AG04450 (cell line): ENCODE measurements at regions of chr9 and their contacts with region 1.

Region 1: GRCh38 chr9:16213781-16214515 is 656.5 kb downstream of the BNC2 start:
- DNase-seq: peak; percentile 95
- H3K4me3 ChIP-seq: no peak overlapping the region
- H3K27ac ChIP-seq: peak overlapping the region; percentile 75
- H3K27me3 ChIP-seq: peaks cover 3% of the 10 kb centered on the region
- CTCF ChIP-seq: no peak

Region 2: DNA sequence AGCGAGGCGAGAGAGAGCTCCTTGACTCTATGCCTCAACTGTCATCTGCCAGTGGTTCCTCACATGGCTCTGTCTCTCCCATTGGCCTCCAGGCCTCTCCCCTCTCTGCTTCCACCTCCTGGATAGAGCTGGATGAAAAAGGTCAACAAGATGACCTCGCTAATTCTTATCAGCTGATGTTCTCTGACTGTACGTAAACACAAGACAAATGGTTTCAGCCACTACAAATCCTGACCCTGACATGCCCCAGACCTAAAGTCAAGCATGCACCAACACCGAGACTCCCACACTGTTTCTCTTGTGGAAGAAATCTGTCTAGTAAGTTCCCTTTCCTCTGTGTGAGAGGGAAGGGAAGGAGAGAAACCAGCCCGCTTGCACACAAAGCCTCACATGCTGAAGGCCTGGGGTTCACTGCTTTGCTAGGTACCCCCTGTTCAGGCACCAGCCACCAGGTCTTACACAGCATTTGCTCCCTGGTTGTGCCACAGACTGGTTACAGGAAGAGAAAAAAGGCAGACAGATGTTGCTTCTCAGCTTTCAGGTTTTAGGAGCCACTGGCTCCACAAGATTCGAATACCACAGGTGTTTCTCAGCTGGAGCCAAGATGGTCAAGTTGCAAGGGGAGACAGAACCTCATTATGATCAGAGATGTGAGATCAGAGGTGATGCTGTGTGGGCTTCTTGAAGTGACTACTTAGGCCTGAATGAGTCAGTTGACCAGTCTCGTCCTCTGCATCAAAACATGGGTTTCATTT is 68.6 kb before region 1 on chr9:
- CTCF ChIA-PET with region 1: no interaction called
- POLR2A ChIA-PET with region 1: no interaction called
- DNase-seq: no peak
- H3K4me3 ChIP-seq: no peak overlapping the region
- H3K27ac ChIP-seq: no peak overlapping the region
- H3K27me3 ChIP-seq: no peaks in the 10 kb centered on the region
- CTCF ChIP-seq: no peak

Region 3: GRCh38 chr9:16202914-16203728 is 10.8 kb before region 1 on chr9:
- CTCF ChIA-PET with region 1: interaction called, 3 read pairs
- POLR2A ChIA-PET with region 1: interaction called, 23 read pairs
- DNase-seq: peak; percentile 70
- H3K4me3 ChIP-seq: no peak overlapping the region
- H3K27ac ChIP-seq: peak overlapping the region; percentile 48
- H3K27me3 ChIP-seq: no peaks in the 10 kb centered on the region
- CTCF ChIP-seq: no peak